Naive thymus-derived CD8-positive, alpha-beta T cell (primary cell): ENCODE measurements at regions of chr15 and their contacts with region 1.

Region 1: GRCh38 chr15:76994971-76995945 is at the start of gene PSTPIP1:
- DNase-seq: peak; percentile 46 to 86 (median 67)
- ATAC-seq: peak; percentile 86 to 89
- H3K4me3 Mint-ChIP-seq: peak within 1 kb of the TSS; percentile 92 to 99 (median 96)
- H3K27ac Mint-ChIP-seq: peak within 1 kb of the TSS; percentile 92 to 99 (median 97)
- H3K4me1 Mint-ChIP-seq: peaks cover 32 to 86% (median 64%) of the 10 kb centered on the region in 4 donors
- H3K27me3 Mint-ChIP-seq: no peaks in the 10 kb centered on the region
- polyA plus RNA-seq, gene PSTPIP1: 34.0 to 50.6 (median 41.8) TPM

Region 2: GRCh38 chr15:76905013-76905839 is 90.0 kb before region 1 on chr15 and contains the start of gene SCAPER:
- POLR2A ChIA-PET with region 1: interaction called, 10 read pairs
- DNase-seq: peak; percentile 85 to 94 (median 89)
- ATAC-seq: peak; percentile 88
- H3K4me3 Mint-ChIP-seq: peak within 1 kb of the TSS; percentile 84 to 97 (median 92)
- H3K27ac Mint-ChIP-seq: peak within 1 kb of the TSS; percentile 93 to 98 (median 96)
- H3K4me1 Mint-ChIP-seq: peaks cover 7 to 37% (median 26%) of the 10 kb centered on the region in 4 donors
- H3K27me3 Mint-ChIP-seq: no peaks in the 10 kb centered on the region
- polyA plus RNA-seq, gene SCAPER: 12.3 to 17.7 (median 15.9) TPM

Region 3: GRCh38 chr15:76931397-76932007 is 63.8 kb before region 1 on chr15 and contains the start of gene RCN2:
- POLR2A ChIA-PET with region 1: interaction called, 31 read pairs
- DNase-seq: peak; percentile 85 to 93 (median 90)
- ATAC-seq: peak; percentile 98 to 99
- H3K4me3 Mint-ChIP-seq: peak within 1 kb of the TSS; percentile 81 to 96 (median 92)
- H3K27ac Mint-ChIP-seq: peak within 1 kb of the TSS; percentile 74 to 97 (median 94)
- H3K4me1 Mint-ChIP-seq: peaks cover 15 to 41% (median 32%) of the 10 kb centered on the region in 4 donors
- H3K27me3 Mint-ChIP-seq: no peaks in the 10 kb centered on the region
- polyA plus RNA-seq, gene RCN2: 40.3 to 46.5 (median 43.6) TPM

Region 4: DNA sequence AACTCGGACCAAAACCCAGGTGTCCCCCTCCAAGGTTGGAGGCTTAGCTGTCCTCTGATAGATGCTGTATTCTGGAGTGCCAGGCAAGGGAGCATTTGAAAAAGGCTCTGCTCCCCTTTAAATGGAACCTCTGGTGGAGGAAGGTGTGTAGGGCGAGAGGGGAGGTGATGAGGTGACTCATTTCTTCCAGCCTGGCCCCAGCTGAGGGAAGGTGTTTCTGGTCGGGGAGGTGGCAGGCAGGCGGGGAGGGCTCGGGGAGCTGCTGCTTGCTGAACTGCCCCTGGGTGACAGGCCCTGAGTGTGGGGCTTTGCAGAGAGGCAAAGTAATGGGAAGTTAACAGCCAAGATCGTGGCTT is 18.5 kb after region 1 on chr15:
- POLR2A ChIA-PET with region 1: interaction called, 79 read pairs
- DNase-seq: peak; percentile 54 to 92 (median 66)
- ATAC-seq: peak; percentile 70 to 87
- H3K4me3 Mint-ChIP-seq: peak overlapping the region; percentile 63 to 90 (median 86)
- H3K27ac Mint-ChIP-seq: peak overlapping the region; percentile 85 to 98 (median 95)
- H3K4me1 Mint-ChIP-seq: peaks cover 45 to 96% (median 91%) of the 10 kb centered on the region in 4 donors
- H3K27me3 Mint-ChIP-seq: no peaks in the 10 kb centered on the region

Region 5: GRCh38 chr15:77024271-77025082 is 29.2 kb after region 1 on chr15:
- POLR2A ChIA-PET with region 1: interaction called, 72 read pairs
- DNase-seq: peak; percentile 42 to 81 (median 65)
- ATAC-seq: peak; percentile 34 to 56
- H3K4me3 Mint-ChIP-seq: peak overlapping the region in 1 of 10 donors; percentile 75
- H3K27ac Mint-ChIP-seq: peak overlapping the region; percentile 13 to 99 (median 94)
- H3K4me1 Mint-ChIP-seq: peaks cover 25 to 55% (median 53%) of the 10 kb centered on the region in 4 donors
- H3K27me3 Mint-ChIP-seq: no peaks in the 10 kb centered on the region

Region 6: DNA sequence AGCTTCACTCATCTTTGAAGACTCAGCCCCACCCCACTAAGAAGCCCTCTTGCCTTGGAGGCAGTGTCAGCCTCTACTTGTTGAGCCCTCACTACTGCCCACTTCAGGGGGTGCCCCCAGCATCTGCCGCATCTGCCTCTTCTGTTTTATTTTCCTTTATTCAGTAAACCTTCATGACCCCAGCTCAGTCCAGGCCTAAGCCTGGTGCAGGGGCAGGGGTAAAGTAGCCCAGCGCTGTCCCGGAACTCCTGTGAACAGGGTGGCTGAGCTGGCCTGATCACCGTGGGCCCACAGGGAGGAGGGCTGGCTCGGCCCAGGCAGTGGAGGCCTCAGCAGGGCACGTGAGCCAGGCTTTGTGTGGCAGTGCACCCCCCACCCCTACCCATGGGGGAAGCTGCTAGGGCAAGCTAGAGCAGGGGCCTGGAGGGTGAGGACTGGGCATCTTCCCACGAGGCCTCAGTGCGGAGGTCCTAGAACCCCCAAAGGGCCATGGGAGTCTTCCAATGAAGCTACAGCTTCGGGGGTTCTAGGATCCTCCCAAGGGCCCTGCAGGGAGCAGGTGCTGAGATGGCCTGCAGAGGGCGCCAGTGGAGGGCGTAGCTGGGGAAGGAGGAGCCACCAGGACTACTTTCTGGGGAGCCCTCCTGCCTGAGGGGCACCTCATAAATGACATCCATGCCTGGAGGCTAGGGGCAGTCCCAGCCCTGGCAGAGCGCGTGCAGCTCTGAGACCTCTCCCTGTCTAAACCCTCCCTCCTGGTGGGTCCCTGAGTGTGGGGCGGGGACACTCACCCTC is 39.6 kb after region 1 on chr15:
- POLR2A ChIA-PET with region 1: interaction called, 18 read pairs
- DNase-seq: peak in 8 of 10 donors; percentile 33 to 73 (median 50)
- ATAC-seq: peak; percentile 53 to 59
- H3K4me3 Mint-ChIP-seq: no peak overlapping the region
- H3K27ac Mint-ChIP-seq: peak overlapping the region in 9 of 10 donors; percentile 48 to 93 (median 84)
- H3K4me1 Mint-ChIP-seq: peaks cover 4 to 27% (median 17%) of the 10 kb centered on the region in 4 donors
- H3K27me3 Mint-ChIP-seq: no peaks in the 10 kb centered on the region